ENCODE measurements at regions of chr5 and their contacts with region 1.

Region 1: GRCh38 chr5:143824851-143825720 is 13.1 kb downstream of the HMHB1 start:
- DNase-seq: peak; percentile 86

Region 2: GRCh38 chr5:142922223-142922952 is 902.7 kb before region 1 on chr5:
- intact Hi-C with region 1: loop called (anchors 5 kb)
- DNase-seq: no peak

Region 3: DNA sequence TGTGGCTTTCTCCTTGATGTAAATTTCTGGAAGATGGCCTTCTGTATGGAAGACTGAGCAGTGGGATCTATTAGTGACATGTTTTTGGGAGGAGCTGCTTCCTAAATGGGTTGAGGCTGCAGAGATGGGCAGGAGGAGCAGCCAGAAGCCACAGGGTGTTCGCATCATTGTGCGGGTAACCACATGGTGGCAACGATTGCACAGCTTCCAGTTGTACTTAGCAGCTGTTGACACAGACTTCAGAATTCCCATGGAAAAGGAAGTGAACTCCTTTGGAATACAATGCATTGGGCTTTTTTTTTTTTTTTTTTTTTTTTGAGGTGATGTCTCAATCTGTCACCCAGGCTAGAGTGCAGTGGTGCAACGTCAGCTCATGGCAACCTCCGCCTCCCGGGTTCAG is 718.9 kb before region 1 on chr5:
- intact Hi-C with region 1: loop called (anchors 2 kb)
- DNase-seq: no peak

Region 4: DNA sequence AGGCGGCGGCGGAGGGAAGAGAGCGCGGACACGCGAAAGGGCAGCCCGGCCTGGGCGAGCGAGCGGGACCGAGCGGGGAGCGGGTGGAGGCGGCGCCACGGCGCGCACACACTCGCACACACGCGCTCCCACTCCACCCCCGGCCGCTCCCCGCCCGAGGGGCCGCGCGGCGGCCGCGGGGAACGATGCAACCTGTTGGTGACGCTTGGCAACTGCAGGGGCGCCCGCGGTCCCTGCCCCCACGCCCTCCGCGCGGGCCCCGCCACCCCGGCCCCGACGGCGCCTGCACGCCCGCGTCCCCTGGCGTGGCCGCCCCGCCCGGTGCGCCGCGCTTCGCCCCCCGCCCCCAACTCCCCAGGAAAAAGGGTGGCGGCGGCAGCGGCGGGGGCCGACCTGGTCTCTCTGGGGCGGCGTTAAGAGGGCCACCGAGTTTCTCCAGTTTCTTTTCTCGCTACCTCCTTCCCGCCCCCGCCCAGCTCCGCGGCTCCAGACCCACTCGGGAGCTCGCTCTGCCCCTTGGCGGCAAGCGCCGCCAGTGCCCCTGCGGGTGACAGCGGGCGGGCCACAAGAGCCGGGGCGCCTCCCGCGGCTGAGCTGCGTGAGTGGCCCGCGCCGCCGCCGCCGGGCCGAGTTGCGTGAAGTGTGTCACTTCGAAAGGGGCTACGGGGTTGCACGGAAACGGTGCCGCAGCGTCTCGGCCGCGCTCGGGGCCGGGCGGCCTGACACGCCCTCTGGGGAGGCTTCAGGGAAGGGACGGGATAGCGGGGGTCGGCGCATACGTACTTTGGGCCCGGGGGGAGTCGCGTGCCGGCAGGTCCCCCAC is 421.3 kb before region 1 on chr5 and contains the start of gene NR3C1:
- intact Hi-C with region 1: loop called (anchors 1 kb)
- DNase-seq: peak; percentile 95
- total RNA-seq, gene NR3C1: 68.5 TPM

Region 5: GRCh38 chr5:143648696-143649095 is 176.4 kb before region 1 on chr5:
- intact Hi-C with region 1: loop called (anchors 5 kb)
- DNase-seq: no peak

Region 6: GRCh38 chr5:143865426-143866025 is 40.4 kb after region 1 on chr5:
- intact Hi-C with region 1: no loop called
- DNase-seq: no peak

Region 7: GRCh38 chr5:143913008-143913752 is 88.1 kb after region 1 on chr5:
- intact Hi-C with region 1: no loop called
- DNase-seq: no peak